ENCODE measurements at regions of chr16 and their contacts with region 1.

Region 1: DNA sequence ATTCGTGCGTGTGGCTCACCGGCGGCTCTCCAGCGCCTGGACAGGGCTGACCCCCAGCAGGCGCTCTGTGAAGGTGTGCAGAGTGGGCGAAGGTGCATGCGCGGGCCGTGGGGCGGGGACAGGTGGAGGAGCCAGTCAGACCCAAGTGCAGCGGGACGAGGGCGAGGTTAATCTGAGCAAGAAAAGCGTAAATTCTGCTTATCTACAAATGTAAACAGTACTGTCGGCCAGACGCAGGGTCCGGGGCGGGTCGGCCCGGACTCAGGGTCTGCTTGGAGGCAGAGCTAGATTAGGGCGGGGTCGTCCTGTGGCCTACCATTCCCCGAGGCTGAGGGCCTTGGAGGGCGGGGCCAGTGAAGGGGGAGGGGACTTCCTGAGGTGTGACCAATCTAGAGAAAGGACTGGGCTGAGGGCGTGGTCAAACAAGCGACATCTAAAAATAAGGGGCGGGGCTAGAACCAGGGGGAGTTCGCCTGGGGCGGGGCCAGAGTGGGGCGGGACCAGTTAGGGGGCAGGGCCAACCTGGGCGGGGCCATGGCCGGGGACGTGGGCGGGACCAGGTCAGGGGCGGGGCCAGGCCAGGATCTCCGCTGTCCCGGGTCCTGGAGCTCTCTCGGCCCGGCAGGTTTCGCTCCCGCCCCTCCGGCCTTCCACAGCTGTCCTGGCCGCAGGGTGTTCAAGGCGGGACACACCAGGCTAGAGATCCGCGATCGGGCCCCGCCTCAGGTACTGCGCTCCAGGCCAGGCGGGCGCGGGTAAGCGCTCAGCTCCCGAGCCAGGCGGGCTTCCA is at the start of gene SEC14L5:
- DNase-seq: peak; percentile 99
- H3K4me3 Mint-ChIP-seq: peak within 1 kb of the TSS; percentile 90
- H3K27ac Mint-ChIP-seq: no peak within 1 kb of the TSS
- H3K4me1 Mint-ChIP-seq: peaks cover 12% of the 10 kb centered on the region
- H3K27me3 Mint-ChIP-seq: peaks cover 14% of the 10 kb centered on the region
- CTCF ChIP-seq: no peak
- total RNA-seq, gene SEC14L5: 0.22 TPM in 1 of 2 replicates, not detected in the other

Region 2: DNA sequence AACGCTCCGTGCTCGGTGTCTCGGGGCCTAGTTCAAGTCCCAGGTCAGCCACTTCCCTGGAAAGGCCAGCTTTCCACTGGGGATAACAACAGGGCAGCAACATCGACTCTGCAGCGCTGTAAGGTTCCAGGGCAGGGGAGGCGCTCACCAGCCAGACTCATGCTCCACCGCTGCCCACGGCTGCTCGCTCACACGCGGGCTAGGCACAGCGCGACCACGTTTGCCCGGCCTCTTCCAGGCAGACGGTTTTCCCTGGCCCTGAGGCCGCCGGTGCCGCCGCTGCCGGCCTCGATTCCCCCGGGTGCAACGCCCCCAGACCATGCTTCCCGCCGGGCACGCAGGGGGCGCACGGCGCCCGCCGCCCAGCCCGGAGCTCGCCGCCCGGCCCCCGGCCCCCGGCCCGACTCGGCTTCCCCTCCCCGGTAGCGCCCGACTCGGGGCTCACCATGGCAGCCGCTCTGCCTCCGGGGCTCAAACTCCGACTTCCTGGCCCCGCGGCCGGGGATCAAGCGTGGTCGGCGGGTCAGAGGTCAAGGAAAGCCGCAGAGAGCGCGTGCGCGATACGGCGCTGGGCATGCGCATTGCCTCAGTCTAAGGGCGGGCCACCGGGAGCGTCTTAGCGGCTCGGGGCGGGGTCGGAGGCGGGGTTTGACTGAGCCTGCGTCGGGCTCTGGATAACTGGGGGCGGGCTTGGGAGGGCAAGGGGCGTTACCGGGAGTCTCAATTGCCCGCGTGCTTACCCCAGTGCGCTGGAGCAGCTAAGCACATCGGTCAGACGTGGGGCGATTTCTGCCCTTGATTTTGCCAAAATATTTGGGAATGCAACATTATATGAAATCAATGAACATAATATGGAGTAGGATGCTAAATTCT is 606.9 kb before region 1 on chr16 and contains the start of gene PAM16:
- CTCF ChIA-PET with region 1: no interaction called
- POLR2A ChIA-PET with region 1: no interaction called
- intact Hi-C with region 1: loop called (anchors 5 kb)
- DNase-seq: peak; percentile 95
- H3K4me3 Mint-ChIP-seq: peak within 1 kb of the TSS; percentile 89
- H3K27ac Mint-ChIP-seq: peak within 1 kb of the TSS; percentile 81
- H3K4me1 Mint-ChIP-seq: peaks cover 8% of the 10 kb centered on the region
- H3K27me3 Mint-ChIP-seq: no peaks in the 10 kb centered on the region
- CTCF ChIP-seq: no peak
- total RNA-seq, gene PAM16: 71.8 and 117 TPM in 2 replicates

Region 3: DNA sequence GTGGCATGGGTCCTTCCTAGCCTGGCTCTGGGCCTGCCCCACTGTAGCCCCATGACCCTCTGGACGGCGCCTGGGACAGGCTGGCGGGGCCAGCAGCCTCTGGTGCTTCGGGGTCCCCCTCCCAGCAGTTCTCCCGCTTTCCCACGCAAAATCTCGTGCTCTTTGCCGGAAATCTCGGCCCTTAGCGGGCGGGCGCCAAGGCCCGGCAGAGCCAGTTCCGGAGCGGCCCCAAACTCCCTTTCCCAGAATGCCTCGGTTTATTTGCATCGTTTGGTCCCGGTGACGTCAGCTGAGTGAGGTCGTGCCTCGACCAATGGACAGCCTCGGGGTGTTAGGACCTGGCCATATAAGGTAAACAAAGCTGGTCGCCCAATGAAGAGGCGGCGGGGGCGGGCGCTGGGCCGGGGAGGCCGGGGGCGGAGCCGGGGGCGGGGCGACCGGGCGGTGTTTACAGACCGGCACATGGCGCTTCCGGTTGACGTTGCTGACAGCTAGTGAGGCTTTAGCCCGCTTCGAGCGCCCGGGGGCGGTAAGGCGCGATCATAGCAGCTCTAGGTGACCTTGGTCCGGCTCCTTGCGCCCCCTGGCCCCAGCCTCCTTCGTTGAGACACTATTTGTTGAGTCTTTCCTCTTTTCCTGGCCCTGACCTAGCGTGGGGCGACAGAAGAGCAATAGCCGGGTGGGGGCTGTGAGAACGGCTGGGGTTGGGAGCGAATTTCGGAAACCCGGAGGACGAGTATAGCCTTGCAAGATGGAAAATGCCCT is 341.7 kb before region 1 on chr16:
- CTCF ChIA-PET with region 1: interaction called, 5 read pairs
- POLR2A ChIA-PET with region 1: no interaction called
- intact Hi-C with region 1: loop called (anchors 10 kb)
- DNase-seq: peak; percentile 100
- H3K4me3 Mint-ChIP-seq: peak overlapping the region; percentile 85
- H3K27ac Mint-ChIP-seq: peak overlapping the region; percentile 98
- H3K4me1 Mint-ChIP-seq: peaks cover 18% of the 10 kb centered on the region
- H3K27me3 Mint-ChIP-seq: no peaks in the 10 kb centered on the region
- CTCF ChIP-seq: peak; percentile 33

Region 4: GRCh38 chr16:4656695-4657686 is 300.9 kb before region 1 on chr16:
- CTCF ChIA-PET with region 1: no interaction called
- POLR2A ChIA-PET with region 1: no interaction called
- intact Hi-C with region 1: no loop called
- DNase-seq: no peak
- H3K4me3 Mint-ChIP-seq: no peak overlapping the region
- H3K27ac Mint-ChIP-seq: no peak overlapping the region
- H3K4me1 Mint-ChIP-seq: no peaks in the 10 kb centered on the region
- H3K27me3 Mint-ChIP-seq: no peaks in the 10 kb centered on the region
- CTCF ChIP-seq: no peak

Region 5: GRCh38 chr16:4734063-4734729 is 223.7 kb before region 1 on chr16 and contains the starts of genes ANKS3 and DNAAF8:
- CTCF ChIA-PET with region 1: interaction called, 7 read pairs
- POLR2A ChIA-PET with region 1: interaction called, 5 read pairs
- intact Hi-C with region 1: loop called (anchors 1 kb)
- DNase-seq: peak; percentile 98
- H3K4me3 Mint-ChIP-seq: peak within 1 kb of the TSS; percentile 98
- H3K27ac Mint-ChIP-seq: peak within 1 kb of the TSS; percentile 98
- H3K4me1 Mint-ChIP-seq: peaks cover 13% of the 10 kb centered on the region
- H3K27me3 Mint-ChIP-seq: no peaks in the 10 kb centered on the region
- CTCF ChIP-seq: no peak
- total RNA-seq, gene ANKS3: 29.9 and 35.0 TPM in 2 replicates
- total RNA-seq, gene DNAAF8: 0.56 and 1.6 TPM in 2 replicates

Region 6: DNA sequence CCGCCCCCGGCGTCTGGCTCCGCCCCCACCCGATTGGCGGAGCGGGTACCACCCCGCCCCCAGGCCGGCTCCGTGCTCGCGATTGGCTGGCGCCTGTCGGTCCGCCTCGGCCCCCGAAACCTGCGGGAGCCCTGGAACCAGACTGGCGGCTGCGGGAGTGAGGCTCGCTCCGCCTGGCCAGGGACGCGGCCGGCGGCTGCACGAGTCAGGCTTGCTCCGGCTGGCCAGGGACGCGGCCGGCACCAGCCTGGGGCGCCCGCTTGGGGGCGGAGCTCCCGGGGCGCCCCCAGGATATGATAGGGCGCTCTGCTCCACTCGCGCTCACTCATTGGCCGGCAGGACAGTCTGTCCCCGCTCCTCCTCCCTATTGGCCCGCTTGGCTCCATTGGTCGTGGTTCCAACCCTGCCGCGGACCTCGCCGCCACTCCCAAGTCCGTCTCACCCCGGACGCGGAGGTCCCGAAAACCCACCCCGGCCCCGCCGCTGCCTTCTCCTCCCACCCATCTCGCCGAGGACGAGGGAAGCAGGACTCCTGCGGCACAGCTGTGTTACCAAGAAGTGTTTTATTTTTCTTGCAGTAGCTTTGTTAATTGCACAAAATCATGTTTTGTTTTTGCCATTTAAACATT is 155.1 kb before region 1 on chr16:
- CTCF ChIA-PET with region 1: interaction called, 5 read pairs
- POLR2A ChIA-PET with region 1: interaction called, 6 read pairs
- intact Hi-C with region 1: loop called (anchors 2 kb)
- DNase-seq: peak; percentile 92
- H3K4me3 Mint-ChIP-seq: peak overlapping the region; percentile 76
- H3K27ac Mint-ChIP-seq: peak overlapping the region; percentile 27
- H3K4me1 Mint-ChIP-seq: peaks cover 6% of the 10 kb centered on the region
- H3K27me3 Mint-ChIP-seq: no peaks in the 10 kb centered on the region
- CTCF ChIP-seq: no peak

Region 7: DNA sequence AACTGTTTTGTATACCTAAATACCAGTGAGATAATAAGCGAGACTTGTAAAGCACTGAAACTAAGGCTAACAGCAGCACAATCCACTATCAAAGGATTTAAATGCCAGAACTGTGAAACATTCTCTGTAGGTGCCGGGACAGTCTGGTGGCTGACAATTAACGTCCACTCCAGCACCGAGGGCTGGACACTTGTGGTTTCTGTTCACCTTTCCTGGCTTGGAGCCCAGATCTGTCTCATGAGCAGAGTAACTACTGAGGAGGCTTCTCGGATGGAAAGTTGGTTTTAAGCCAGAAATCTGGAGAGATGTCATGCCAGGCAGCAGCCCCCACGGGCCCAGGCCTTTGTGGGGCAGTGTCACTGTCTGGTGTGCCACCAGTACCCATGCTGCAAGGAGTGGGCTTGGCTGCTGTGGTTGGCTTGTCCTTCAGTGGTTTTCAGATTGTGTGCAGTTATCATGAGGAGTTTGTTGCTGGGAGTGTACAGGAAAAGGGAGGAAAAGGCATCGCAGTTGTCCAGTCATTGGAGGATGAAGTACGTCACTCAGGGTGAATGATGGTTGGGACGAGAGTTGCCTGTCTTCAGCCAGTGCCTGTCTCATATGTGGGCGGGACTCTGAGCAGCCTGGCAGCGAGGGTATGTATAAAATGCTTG is 75.2 kb before region 1 on chr16:
- CTCF ChIA-PET with region 1: interaction called, 10 read pairs
- POLR2A ChIA-PET with region 1: interaction called, 4 read pairs
- intact Hi-C with region 1: loop called (anchors 1 kb)
- DNase-seq: peak; percentile 94
- H3K4me3 Mint-ChIP-seq: no peak overlapping the region
- H3K27ac Mint-ChIP-seq: no peak overlapping the region
- H3K4me1 Mint-ChIP-seq: peaks cover 31% of the 10 kb centered on the region
- H3K27me3 Mint-ChIP-seq: no peaks in the 10 kb centered on the region
- CTCF ChIP-seq: no peak

Region 8: GRCh38 chr16:4944333-4945281 is 13.3 kb before region 1 on chr16:
- CTCF ChIA-PET with region 1: interaction called, 29 read pairs
- POLR2A ChIA-PET with region 1: interaction called, 14 read pairs
- intact Hi-C with region 1: no loop called
- DNase-seq: peak; percentile 98
- H3K4me3 Mint-ChIP-seq: peak overlapping the region; percentile 54
- H3K27ac Mint-ChIP-seq: peak overlapping the region; percentile 91
- H3K4me1 Mint-ChIP-seq: peaks cover 45% of the 10 kb centered on the region
- H3K27me3 Mint-ChIP-seq: no peaks in the 10 kb centered on the region
- CTCF ChIP-seq: no peak

Region 9: GRCh38 chr16:4968879-4969456 is 11.1 kb after region 1 on chr16:
- CTCF ChIA-PET with region 1: no interaction called
- POLR2A ChIA-PET with region 1: no interaction called
- intact Hi-C with region 1: no loop called
- DNase-seq: no peak
- H3K4me3 Mint-ChIP-seq: no peak overlapping the region
- H3K27ac Mint-ChIP-seq: no peak overlapping the region
- H3K4me1 Mint-ChIP-seq: no peaks in the 10 kb centered on the region
- H3K27me3 Mint-ChIP-seq: peaks cover 19% of the 10 kb centered on the region
- CTCF ChIP-seq: no peak